Activated T-helper 1 cell treated with anti-CD3 and anti-CD28 coated beads, Interleukin-12 subunit alpha, Interleukin-12 subunit beta, Interleukin-2, Interleukin-4 antibody, amounts not matched to agents 30 ng/mL and 10 ng/mL and 1 ng/mL, durations not matched to agents 14 hours and 24 hours and 36 hours (primary cell): ENCODE measurements at regions of chr11 and their contacts with region 1.

Region 1: GRCh38 chr11:13289081-13289480 is 11.5 kb downstream of the BMAL1 start:
- DNase-seq: no peak
- H3K4me3 Mint-ChIP-seq: no peak overlapping the region
- H3K27ac Mint-ChIP-seq: peak overlapping the region; percentile 84
- H3K4me1 Mint-ChIP-seq: peaks cover 84% of the 10 kb centered on the region
- H3K27me3 Mint-ChIP-seq: no peaks in the 10 kb centered on the region

Region 2: DNA sequence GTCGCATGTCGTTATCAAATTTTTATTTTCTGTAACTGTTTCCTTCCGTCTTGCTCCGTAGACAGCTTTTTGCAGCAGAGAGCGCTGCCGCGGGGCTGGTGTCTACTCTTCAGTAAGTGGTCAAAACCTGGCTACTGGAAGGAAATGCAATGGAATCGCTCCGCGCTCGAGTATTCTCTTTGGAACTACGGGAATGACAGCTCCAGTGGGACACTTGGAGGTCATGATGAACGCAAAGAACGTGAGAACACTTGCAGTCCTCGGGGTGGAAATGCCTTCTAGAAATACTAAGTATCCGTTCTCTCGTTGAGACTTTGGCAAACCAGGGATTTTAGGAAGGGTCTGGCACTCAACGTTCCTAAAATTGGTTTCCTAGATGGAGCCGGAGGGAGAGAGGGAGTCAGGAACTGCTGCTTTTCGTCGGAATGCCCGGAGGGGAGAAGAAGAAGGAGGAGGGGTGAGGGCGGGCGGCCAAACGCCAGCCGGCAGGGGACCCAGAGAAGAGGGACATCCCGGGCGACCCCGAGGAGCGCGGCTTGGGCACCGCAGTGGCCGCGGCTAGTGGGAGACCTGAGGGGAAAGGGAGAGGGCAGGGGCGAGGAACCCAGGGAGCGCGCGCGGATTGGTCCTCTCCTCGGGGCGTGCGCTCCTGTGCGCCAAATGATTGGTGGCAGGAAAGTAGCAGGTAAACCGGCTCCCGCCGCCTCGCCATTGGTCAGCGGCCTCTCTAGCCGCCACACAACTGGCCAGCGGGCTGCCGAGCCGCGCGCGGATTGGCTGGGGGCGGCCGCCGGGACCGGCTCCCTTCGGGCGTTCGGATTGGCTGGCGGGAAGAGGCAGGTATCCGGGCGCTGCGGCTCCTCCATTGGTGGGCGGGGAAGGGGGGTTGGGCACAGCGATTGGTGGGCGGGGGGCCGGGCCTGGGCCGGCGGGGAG is 12.0 kb before region 1 on chr11:
- intact Hi-C with region 1: loop called (anchors 1 kb)
- DNase-seq: peak; percentile 98
- H3K4me3 Mint-ChIP-seq: peak overlapping the region; percentile 98
- H3K27ac Mint-ChIP-seq: peak overlapping the region; percentile 80
- H3K4me1 Mint-ChIP-seq: peaks cover 52% of the 10 kb centered on the region
- H3K27me3 Mint-ChIP-seq: peaks cover 46% of the 10 kb centered on the region

Region 3: DNA sequence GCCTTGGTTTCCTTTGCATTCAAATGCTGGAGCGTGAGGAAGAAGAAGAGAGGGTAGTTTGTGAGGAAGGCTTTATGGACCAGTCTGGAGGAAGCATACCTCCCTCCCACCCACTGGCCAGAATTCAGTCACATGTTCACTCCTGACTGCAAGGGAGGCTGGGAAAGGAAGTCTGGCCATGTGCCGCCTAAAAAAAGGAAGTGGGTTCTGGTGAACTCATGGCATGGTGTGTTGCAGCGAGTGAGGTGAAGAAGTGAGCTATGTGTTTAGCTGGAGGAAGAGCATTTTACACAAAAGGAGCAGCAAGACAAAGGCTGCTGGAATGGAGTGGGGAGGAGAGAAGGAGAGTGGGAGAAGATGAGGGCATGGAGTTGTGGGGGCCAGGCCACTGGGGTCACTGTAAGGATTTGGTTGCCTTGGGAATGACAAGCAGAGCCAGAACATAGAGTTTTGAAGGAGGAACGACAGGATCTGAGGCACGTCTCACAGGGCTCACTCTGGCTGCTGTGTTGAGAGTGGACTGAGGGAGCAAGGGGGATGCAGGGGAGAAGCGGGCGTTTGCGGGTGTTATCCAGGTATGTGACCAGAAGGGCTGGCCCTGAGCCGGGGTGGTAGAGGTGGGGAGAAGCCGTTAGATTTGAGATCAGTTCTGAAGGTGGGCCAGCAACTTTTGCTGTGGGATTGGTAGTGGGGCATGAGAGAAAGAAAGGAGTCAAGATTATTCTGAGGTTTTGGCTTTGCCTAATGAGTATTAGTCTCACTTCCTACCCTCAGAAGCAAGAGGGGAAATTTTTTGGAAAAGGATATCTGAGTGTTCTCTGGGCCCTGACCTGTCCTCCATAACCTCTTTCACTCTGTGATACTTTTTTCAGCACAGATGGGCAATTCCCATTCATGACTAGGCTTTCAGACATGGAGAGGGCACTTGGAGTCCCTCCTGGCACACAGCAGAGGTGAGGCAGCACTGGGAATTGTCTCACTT is 14.9 kb after region 1 on chr11:
- intact Hi-C with region 1: no loop called
- DNase-seq: no peak
- H3K4me3 Mint-ChIP-seq: peak overlapping the region; percentile 8
- H3K27ac Mint-ChIP-seq: peak overlapping the region; percentile 49
- H3K4me1 Mint-ChIP-seq: peaks cover 46% of the 10 kb centered on the region
- H3K27me3 Mint-ChIP-seq: no peaks in the 10 kb centered on the region

Region 4: DNA sequence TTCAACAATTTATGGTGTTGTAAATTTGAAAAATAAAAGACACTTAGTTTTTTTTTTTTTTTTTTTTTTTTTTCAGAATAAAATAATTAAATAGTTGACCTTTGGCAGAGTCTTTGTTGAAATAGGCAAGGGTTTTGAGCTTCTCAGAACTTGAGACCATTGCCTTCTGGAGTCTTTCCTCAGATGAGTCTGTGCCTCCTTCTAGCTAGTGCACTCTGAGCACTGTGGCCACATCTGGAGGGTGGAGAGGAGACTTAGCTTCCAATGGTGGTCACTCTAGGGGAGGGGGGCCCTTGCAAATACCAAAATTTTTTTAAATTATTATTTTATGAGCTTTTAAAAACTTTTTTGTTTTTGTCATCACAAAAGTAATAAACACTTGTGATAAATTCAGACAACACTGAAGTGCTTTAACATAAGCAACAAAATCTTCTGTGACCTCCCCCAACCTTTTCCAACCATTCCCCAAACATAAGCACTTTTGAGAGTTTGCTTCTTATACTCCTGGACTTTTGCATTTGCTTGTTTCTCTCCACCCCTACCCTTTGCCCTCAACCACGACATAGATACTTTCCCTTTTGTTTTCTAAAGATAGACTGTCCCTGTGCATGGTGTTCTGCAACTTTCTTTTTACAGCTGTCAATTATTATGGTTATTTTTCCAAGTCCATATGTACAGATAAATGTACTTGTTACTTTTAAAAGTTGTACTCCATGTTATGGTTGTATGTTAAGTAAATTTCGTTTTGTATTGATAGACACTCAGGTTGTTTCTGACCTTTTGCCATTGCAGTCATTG is 29.6 kb after region 1 on chr11:
- intact Hi-C with region 1: loop called (anchors 1 kb)
- DNase-seq: no peak
- H3K4me3 Mint-ChIP-seq: peak overlapping the region; percentile 39
- H3K27ac Mint-ChIP-seq: peak overlapping the region; percentile 45
- H3K4me1 Mint-ChIP-seq: peaks cover 57% of the 10 kb centered on the region
- H3K27me3 Mint-ChIP-seq: no peaks in the 10 kb centered on the region

Region 5: GRCh38 chr11:13577881-13578280 is 288.8 kb after region 1 on chr11:
- intact Hi-C with region 1: no loop called
- DNase-seq: no peak
- H3K4me3 Mint-ChIP-seq: no peak overlapping the region
- H3K27ac Mint-ChIP-seq: no peak overlapping the region
- H3K4me1 Mint-ChIP-seq: no peaks in the 10 kb centered on the region
- H3K27me3 Mint-ChIP-seq: peaks cover 3% of the 10 kb centered on the region